ENCODE measurements at regions of chr2 and their contacts with region 1.

Region 1: GRCh38 chr2:149365826-149366583 is 35.6 kb downstream of the LYPD6 start:
- DNase-seq: peak; percentile 63 to 91
- H3K4me3 ChIP-seq: peak overlapping the region; percentile 9; the same call in 1 of the 2 replicates
- H3K27ac ChIP-seq: peak overlapping the region; percentile 78
- H3K4me1 ChIP-seq: peaks cover 23% of the 10 kb centered on the region
- H3K27me3 ChIP-seq: no peaks in the 10 kb centered on the region
- CTCF ChIP-seq: no peak

Region 2: GRCh38 chr2:149084924-149085795 is 280.8 kb before region 1 on chr2:
- CTCF ChIA-PET with region 1: no interaction called
- POLR2A ChIA-PET with region 1: no interaction called
- intact Hi-C with region 1: no loop called
- DNase-seq: no peak
- H3K4me3 ChIP-seq: no peak overlapping the region
- H3K27ac ChIP-seq: no peak overlapping the region
- H3K4me1 ChIP-seq: peaks cover 25% of the 10 kb centered on the region
- H3K27me3 ChIP-seq: no peaks in the 10 kb centered on the region
- CTCF ChIP-seq: no peak

Region 3: GRCh38 chr2:149410701-149411484 is 44.9 kb after region 1 on chr2:
- CTCF ChIA-PET with region 1: no interaction called
- POLR2A ChIA-PET with region 1: no interaction called
- intact Hi-C with region 1: loop called (anchors 5 kb)
- DNase-seq: peak; percentile 23 to 65
- H3K4me3 ChIP-seq: no peak overlapping the region
- H3K27ac ChIP-seq: no peak overlapping the region
- H3K4me1 ChIP-seq: peaks cover 8% of the 10 kb centered on the region; the same call in 1 of the 2 replicates
- H3K27me3 ChIP-seq: no peaks in the 10 kb centered on the region
- CTCF ChIP-seq: no peak

Region 4: GRCh38 chr2:149538138-149538833 is 172.3 kb after region 1 on chr2:
- CTCF ChIA-PET with region 1: no interaction called
- POLR2A ChIA-PET with region 1: no interaction called
- intact Hi-C with region 1: loop called (anchors 1 kb)
- DNase-seq: peak; percentile 57 to 85
- H3K4me3 ChIP-seq: no peak overlapping the region
- H3K27ac ChIP-seq: no peak overlapping the region
- H3K4me1 ChIP-seq: peaks cover 13% of the 10 kb centered on the region; the same call in 1 of the 2 replicates
- H3K27me3 ChIP-seq: no peaks in the 10 kb centered on the region
- CTCF ChIP-seq: no peak

Region 5: DNA sequence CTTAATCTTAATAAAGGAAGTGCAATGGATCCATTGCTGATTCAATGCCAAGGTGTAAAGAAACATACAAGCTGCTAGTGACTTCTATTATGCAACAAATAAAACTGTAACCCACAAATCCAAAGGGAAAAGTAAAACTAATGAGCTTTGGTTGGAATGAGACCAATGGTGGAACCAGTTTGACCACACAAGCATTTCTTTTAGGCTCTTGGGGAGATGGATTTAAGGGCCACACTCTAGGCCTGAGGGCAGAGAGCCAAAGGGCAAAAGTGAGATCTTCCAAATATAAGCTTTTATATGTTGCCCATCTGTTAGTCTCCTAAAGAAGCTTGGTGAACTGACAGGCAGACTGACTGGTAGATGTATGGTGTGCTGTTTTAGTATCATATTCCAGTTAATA is 263.0 kb after region 1 on chr2:
- CTCF ChIA-PET with region 1: interaction called, 11 read pairs
- POLR2A ChIA-PET with region 1: no interaction called
- intact Hi-C with region 1: no loop called
- DNase-seq: no peak
- H3K4me3 ChIP-seq: no peak overlapping the region
- H3K27ac ChIP-seq: no peak overlapping the region
- H3K4me1 ChIP-seq: no peaks in the 10 kb centered on the region
- H3K27me3 ChIP-seq: no peaks in the 10 kb centered on the region
- CTCF ChIP-seq: no peak